Activated CD4-positive, alpha-beta T cell treated with anti-CD3 and anti-CD28 coated beads, Interleukin-2, amount 10 ng/mL, durations not matched to agents 24 days and 14 days (primary cell): ENCODE measurements at regions of chr5 and their contacts with region 1.

Region 1: DNA sequence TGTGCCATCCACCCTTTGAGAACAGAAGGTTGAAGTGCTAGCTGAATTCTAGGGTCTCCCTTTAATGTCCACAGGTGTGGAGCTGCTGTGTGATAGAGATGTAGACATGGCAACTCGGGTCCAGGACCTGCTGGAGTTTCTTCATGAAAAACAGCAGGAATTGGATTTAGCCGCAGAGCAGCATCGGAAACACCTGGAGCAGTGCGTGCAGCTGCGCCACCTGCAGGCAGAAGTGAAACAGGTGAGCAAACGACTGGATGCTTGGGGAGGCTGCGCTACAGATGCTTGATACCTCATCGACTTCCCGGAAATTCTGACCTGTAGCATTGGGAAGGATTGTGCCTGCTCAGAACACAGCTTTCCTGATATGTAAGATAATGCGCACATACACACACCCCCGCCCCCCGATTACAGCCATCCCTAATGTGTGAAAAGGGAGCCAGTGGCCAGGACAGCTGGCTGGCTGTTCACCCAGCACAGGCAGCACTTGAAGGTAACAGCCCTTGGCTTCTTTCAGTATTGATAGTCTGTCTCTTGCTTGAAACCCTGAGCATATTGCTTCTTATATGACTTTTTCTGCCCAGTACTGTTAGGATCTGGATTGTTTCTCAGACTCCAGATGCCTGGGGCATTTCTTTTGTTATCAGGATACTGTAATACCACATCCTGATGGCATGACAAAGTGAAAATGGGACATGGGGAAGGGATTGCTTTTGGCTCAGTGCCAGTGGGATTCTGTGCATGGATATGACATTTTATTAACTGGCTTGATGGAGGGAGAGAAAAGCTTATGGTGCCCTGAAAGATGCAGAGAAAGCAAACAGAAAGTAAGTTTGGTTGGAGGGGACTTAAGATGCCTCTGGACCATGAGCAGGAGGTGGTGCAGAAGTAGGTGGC is 216.8 kb upstream of the OTULINL start:
- DNase-seq: peak; percentile 62
- H3K4me3 Mint-ChIP-seq: peak overlapping the region; percentile 56
- H3K27ac Mint-ChIP-seq: peak overlapping the region; percentile 68
- H3K4me1 Mint-ChIP-seq: peaks cover 44% of the 10 kb centered on the region
- H3K27me3 Mint-ChIP-seq: no peaks in the 10 kb centered on the region

Region 2: GRCh38 chr5:13987843-13988464 is 376.9 kb before region 1 on chr5:
- intact Hi-C with region 1: loop called (anchors 10 kb)
- DNase-seq: peak; percentile 65
- H3K4me3 Mint-ChIP-seq: no peak overlapping the region
- H3K27ac Mint-ChIP-seq: no peak overlapping the region
- H3K4me1 Mint-ChIP-seq: no peaks in the 10 kb centered on the region
- H3K27me3 Mint-ChIP-seq: peaks cover 2% of the 10 kb centered on the region

Region 3: DNA sequence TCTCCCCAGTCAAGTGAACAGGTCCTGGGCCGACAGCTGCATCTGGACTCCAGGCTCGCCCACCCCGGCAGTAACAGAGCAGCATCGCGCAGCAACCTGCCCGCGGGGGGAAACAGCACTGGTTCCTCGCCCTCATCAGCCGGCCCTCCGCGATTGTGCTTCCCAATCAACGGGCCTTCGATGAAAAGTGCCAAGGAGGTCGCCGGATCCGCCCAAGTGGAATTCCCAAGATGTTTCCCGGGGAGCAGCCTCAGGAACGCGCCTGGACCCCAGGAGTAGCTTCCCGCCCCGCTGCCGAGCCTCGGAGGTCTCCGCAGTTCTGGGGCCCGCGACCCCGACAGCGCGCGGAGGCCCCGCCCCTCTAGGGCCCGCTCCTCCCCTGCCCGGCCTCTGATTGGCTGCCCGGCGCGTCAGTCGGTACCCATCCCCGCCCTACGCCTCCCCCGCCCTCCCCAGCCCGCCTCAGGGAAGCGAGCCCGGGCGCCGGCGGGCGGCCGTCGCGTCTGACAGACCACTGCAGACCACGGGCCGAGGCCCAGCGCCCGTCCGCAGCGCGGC is 216.6 kb after region 1 on chr5 and contains the start of gene OTULINL:
- intact Hi-C with region 1: loop called (anchors 5 kb)
- DNase-seq: peak; percentile 95
- H3K4me3 Mint-ChIP-seq: peak within 1 kb of the TSS; percentile 83
- H3K27ac Mint-ChIP-seq: peak within 1 kb of the TSS; percentile 69
- H3K4me1 Mint-ChIP-seq: peaks cover 31% of the 10 kb centered on the region
- H3K27me3 Mint-ChIP-seq: peaks cover 16% of the 10 kb centered on the region
- total RNA-seq, gene OTULINL: 9.4 and 11.4 TPM in 2 replicates

Region 4: DNA sequence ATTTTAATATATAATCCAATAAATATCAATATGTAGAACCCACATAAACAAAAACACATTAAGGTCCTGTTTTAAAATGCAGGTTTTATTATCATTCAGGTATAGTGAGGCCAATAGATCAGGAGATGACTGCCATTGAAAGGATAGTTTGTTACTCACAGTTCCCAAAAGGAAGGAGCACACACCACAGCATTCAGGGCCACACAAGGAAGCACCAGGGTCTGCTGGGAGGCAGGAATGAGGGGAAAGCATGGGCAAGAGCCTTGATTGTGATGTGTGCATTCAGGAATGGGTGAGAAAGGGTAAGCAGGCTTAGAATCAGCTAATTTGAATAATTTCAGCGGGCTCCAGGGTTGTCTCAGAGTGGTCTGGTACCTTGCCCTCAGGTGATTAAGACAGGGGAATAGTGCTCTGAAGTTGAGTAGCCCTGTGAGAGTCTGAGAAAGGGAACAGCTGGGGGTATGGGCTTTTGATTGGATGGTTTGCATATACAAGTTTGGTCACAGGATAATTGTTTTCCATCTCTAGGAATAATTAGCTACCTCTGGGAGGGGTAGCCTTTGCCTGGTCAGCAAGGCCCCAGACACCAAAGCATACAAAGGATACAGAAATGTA is 279.9 kb after region 1 on chr5:
- intact Hi-C with region 1: loop called (anchors 1 kb)
- DNase-seq: no peak
- H3K4me3 Mint-ChIP-seq: no peak overlapping the region
- H3K27ac Mint-ChIP-seq: no peak overlapping the region
- H3K4me1 Mint-ChIP-seq: peaks cover 5% of the 10 kb centered on the region
- H3K27me3 Mint-ChIP-seq: peaks cover 30% of the 10 kb centered on the region